ENCODE measurements at regions of chr4 and their contacts with region 1.

Region 1: DNA sequence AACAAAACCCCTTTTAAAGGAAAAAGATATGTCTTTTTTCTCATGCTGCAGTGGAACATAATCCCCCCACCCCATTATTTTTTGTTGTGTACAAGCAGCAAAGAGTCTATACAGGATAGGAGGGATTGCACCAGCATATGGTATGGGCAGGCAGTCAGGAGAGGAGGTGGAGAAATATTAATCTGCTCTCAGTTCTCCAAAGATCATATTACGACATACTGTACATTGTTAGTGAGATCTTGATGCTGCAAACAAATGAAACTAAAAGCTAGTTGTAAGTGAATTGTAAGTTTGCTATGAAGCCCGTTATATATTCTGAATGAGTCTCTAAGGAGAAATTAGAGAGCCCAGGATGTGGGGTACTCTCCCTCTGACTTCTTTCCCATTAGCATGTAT is 75.3 kb downstream of the RAPGEF2 start:
- DNase-seq: no peak
- H3K4me3 ChIP-seq: no peak overlapping the region
- H3K27ac ChIP-seq: no peak overlapping the region
- H3K4me1 ChIP-seq: peaks cover 7 to 17% (median 11%) of the 10 kb centered on the region in 4 experiments
- H3K27me3 ChIP-seq: no peaks in the 10 kb centered on the region
- CTCF ChIP-seq: no peak
- EP300 ChIP-seq: no peak
- POLR2A ChIP-seq: no peak
- RAD21 ChIP-seq: no peak

Region 2: DNA sequence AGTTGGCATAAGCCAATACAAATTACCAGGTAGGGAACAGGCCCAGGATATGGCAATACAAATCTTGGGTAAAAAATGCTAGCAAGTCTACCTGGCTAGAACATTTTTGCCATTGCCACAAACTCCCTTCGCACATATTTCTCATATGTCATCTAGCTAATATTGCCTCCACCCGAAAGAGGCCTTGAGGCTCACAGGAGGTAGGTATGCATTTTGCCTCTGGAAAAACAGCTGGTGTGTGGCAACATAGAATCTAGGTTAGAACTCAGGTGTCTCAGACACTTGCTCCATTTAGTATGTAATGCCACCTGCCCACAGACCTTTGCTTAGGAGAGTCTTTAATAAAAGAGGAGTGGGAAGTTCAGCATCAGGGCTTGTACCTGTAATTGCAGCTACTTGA is 91.5 kb before region 1 on chr4:
- CTCF ChIA-PET with region 1: no interaction called
- POLR2A ChIA-PET with region 1: no interaction called
- DNase-seq: no peak
- H3K4me3 ChIP-seq: no peak overlapping the region
- H3K27ac ChIP-seq: no peak overlapping the region
- H3K4me1 ChIP-seq: no peaks in the 10 kb centered on the region
- H3K27me3 ChIP-seq: no peaks in the 10 kb centered on the region
- CTCF ChIP-seq: no peak
- EP300 ChIP-seq: no peak
- POLR2A ChIP-seq: no peak
- RAD21 ChIP-seq: no peak

Region 3: GRCh38 chr4:159191989-159192388 is 13.8 kb after region 1 on chr4:
- CTCF ChIA-PET with region 1: interaction called, 24 read pairs
- POLR2A ChIA-PET with region 1: no interaction called
- DNase-seq: no peak
- H3K4me3 ChIP-seq: no peak overlapping the region
- H3K27ac ChIP-seq: no peak overlapping the region
- H3K4me1 ChIP-seq: no peaks in the 10 kb centered on the region; a peak in 1 of 7 replicates
- H3K27me3 ChIP-seq: no peaks in the 10 kb centered on the region
- CTCF ChIP-seq: peak in 2 of 3 experiments; percentile 61 to 71; a peak in 3 of 4 replicates
- EP300 ChIP-seq: no peak
- POLR2A ChIP-seq: no peak
- RAD21 ChIP-seq: peak; percentile 53 to 63; a peak in 3 of 4 replicates